PC-9 (cell line): ENCODE measurements at regions of chr4 and their contacts with region 1.

Region 1: GRCh38 chr4:41611881-41612871 is 74.2 kb downstream of the LIMCH1 start:
- DNase-seq: peak; percentile 68 to 94
- H3K4me3 ChIP-seq: peak overlapping the region; percentile 37; the same call in 1 of the 2 replicates
- H3K27ac ChIP-seq: peak overlapping the region; percentile 82
- H3K4me1 ChIP-seq: peaks cover 43% of the 10 kb centered on the region
- H3K27me3 ChIP-seq: no peaks in the 10 kb centered on the region
- CTCF ChIP-seq: no peak

Region 2: DNA sequence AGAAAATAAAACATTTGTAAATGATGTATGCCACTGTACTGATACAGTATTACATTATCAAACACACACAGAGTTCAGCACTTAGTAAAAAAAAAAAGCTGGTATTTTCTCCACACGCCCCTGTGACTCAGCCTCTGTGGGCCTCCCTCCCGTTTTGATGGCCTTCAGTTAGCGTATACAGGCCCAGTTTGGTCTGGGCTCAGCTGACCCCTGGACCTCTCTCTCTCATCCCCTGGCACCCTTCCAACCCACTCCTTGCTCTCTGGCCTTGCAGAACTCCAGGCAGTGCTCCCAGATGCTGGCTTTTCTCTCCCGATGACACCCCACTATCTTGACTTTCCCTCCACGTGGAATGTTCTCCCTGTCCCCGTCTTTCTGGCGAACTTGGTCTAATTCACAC is 163.2 kb before region 1 on chr4:
- CTCF ChIA-PET with region 1: interaction called, 3 read pairs
- POLR2A ChIA-PET with region 1: interaction called, 25 read pairs
- intact Hi-C with region 1: no loop called
- DNase-seq: no peak
- H3K4me3 ChIP-seq: no peak overlapping the region
- H3K27ac ChIP-seq: no peak overlapping the region
- H3K4me1 ChIP-seq: no peaks in the 10 kb centered on the region; the same call in 1 of the 2 replicates
- H3K27me3 ChIP-seq: no peaks in the 10 kb centered on the region
- CTCF ChIP-seq: no peak